ENCODE measurements at regions of chr3 and their contacts with region 1.

Region 1: DNA sequence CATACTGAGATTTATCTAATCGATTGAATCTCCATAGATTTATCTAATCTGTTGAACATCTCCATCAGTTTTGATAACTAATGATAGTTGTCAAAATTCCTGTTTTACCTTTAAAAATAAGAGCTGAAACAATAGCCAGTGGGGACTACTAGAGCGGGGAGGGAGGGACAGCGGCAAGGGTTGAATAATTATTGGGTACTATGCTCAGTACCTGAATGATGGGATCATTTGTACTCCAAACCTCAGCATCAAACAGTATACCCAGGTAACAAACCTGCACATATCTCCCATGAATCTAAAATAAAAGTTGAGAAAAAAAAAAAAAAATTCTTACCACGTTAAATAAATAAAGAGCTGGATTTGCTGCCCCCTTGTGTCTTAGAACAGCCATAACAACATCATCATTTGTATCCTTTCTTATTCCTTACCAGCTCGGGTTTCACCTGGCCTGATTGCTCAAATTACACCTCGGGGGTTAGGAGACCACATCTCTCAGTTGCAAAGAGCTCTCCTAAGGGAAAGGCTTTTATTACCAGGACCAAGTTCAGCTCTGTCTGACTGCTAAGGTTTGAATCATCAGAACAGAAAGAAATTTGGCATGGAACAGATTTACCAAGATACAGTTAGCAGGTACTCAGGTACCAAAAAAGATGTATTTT is 25.7 kb upstream of the RPL39L start:
- DNase-seq: peak; percentile 36
- ATAC-seq: peak; percentile 70
- H3K4me3 Mint-ChIP-seq: no peak overlapping the region
- H3K27ac Mint-ChIP-seq: no peak overlapping the region
- H3K4me1 Mint-ChIP-seq: peaks cover 2% of the 10 kb centered on the region
- H3K27me3 Mint-ChIP-seq: no peaks in the 10 kb centered on the region

Region 2: GRCh38 chr3:186277268-186277909 is 887.6 kb before region 1 on chr3:
- CTCF ChIA-PET with region 1: no interaction called
- POLR2A ChIA-PET with region 1: no interaction called
- intact Hi-C with region 1: no loop called
- DNase-seq: peak; percentile 16
- ATAC-seq: no peak
- H3K4me3 Mint-ChIP-seq: no peak overlapping the region
- H3K27ac Mint-ChIP-seq: no peak overlapping the region
- H3K4me1 Mint-ChIP-seq: peaks cover 5% of the 10 kb centered on the region
- H3K27me3 Mint-ChIP-seq: peaks cover 5% of the 10 kb centered on the region

Region 3: DNA sequence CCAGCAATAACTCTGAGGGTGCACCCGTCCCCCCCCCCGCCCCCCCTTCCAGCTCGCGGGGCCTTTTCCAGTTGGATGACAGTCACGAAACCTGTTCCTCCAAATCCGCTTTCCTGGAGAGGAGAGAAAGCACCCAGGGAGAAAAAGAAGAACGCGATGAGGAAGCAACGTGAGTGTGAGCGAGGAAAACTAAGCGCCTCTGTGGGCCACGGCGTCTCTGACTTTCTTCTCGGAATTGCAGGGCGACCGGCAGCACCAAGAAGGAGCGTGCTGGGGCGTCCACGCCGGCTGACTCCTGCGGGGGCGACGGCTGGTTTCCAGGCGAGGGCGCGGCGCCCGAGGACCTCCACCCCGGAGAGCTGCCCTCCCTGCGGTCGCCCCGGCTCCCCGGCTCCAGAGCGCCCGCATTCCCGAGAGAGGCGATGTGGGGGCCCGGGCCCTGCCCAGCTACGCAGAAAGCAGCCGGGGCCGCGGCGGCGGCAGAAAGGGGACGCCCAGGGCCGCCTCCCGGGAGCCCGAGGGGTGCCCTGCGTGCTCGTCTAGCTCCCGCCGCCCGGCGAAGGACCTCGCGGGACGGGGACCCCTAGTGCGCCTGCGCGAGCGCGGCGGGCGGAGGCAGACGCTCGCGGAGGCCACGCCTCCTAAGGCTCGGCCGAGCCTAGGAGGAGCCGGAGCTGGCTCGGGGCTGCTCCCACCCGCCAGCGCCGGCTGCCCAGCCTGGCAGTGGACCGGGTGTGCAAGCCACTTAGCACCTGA is 337.9 kb before region 1 on chr3:
- CTCF ChIA-PET with region 1: interaction called, 24 read pairs
- POLR2A ChIA-PET with region 1: no interaction called
- intact Hi-C with region 1: loop called in 1 of 2 experiments (anchors 1 kb)
- DNase-seq: peak; percentile 91
- ATAC-seq: peak; percentile 83
- H3K4me3 Mint-ChIP-seq: peak overlapping the region; percentile 82
- H3K27ac Mint-ChIP-seq: no peak overlapping the region
- H3K4me1 Mint-ChIP-seq: peaks cover 23% of the 10 kb centered on the region
- H3K27me3 Mint-ChIP-seq: peaks cover 31% of the 10 kb centered on the region

Region 4: GRCh38 chr3:187085021-187085666 is 79.9 kb before region 1 on chr3:
- CTCF ChIA-PET with region 1: interaction called, 10 read pairs
- POLR2A ChIA-PET with region 1: no interaction called
- intact Hi-C with region 1: no loop called
- DNase-seq: no peak
- ATAC-seq: no peak
- H3K4me3 Mint-ChIP-seq: no peak overlapping the region
- H3K27ac Mint-ChIP-seq: no peak overlapping the region
- H3K4me1 Mint-ChIP-seq: peaks cover 9% of the 10 kb centered on the region
- H3K27me3 Mint-ChIP-seq: no peaks in the 10 kb centered on the region

Region 5: GRCh38 chr3:187112934-187113793 is 51.9 kb before region 1 on chr3:
- CTCF ChIA-PET with region 1: interaction called, 144 read pairs
- POLR2A ChIA-PET with region 1: no interaction called
- intact Hi-C with region 1: loop called (anchors 1 kb)
- DNase-seq: no peak
- ATAC-seq: peak; percentile 63
- H3K4me3 Mint-ChIP-seq: no peak overlapping the region
- H3K27ac Mint-ChIP-seq: peak overlapping the region; percentile 35
- H3K4me1 Mint-ChIP-seq: peaks cover 7% of the 10 kb centered on the region
- H3K27me3 Mint-ChIP-seq: no peaks in the 10 kb centered on the region

Region 6: DNA sequence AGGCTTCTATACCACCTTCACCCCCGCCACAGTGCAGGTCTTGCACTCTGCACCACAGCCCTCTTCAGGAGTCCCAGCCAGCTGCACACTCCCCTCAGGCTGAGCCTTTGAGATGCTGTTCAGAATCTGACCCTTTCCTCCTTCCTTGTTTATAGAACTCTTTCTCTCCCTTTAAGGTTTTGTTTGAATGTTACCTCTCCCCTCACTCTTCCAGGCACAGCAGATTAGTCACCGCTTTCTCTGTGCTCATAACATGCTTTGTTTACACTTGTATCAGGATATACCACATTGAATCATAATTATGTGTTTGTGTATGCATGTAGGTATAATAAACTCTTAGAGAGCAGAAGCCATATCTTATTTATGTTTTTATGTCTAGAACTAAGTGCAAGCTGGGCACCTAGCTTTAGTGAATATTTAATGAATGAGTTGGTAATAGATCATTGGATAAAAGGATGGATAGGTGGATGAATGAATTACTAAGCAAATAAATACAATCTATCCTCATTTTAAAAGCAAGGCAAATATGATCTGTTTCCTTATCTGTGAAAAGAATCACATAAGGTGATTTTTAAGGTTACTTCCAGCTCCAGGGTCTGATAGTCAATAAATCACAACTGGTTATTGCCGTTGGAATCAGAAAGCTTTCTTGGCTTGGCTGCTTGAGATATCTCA is 748.7 kb after region 1 on chr3:
- CTCF ChIA-PET with region 1: no interaction called
- POLR2A ChIA-PET with region 1: no interaction called
- intact Hi-C with region 1: no loop called
- DNase-seq: no peak
- ATAC-seq: peak; percentile 58
- H3K4me3 Mint-ChIP-seq: no peak overlapping the region
- H3K27ac Mint-ChIP-seq: no peak overlapping the region
- H3K4me1 Mint-ChIP-seq: peaks cover 31% of the 10 kb centered on the region
- H3K27me3 Mint-ChIP-seq: peaks cover 2% of the 10 kb centered on the region

Measured in activated CD4-positive, alpha-beta T cell treated with anti-CD3 and anti-CD28 coated beads for 36 hours (primary cell).